Gastrocnemius medialis (tissue), 4 donors: ENCODE measurements at regions of chr3 and their contacts with region 1.

Region 1: DNA sequence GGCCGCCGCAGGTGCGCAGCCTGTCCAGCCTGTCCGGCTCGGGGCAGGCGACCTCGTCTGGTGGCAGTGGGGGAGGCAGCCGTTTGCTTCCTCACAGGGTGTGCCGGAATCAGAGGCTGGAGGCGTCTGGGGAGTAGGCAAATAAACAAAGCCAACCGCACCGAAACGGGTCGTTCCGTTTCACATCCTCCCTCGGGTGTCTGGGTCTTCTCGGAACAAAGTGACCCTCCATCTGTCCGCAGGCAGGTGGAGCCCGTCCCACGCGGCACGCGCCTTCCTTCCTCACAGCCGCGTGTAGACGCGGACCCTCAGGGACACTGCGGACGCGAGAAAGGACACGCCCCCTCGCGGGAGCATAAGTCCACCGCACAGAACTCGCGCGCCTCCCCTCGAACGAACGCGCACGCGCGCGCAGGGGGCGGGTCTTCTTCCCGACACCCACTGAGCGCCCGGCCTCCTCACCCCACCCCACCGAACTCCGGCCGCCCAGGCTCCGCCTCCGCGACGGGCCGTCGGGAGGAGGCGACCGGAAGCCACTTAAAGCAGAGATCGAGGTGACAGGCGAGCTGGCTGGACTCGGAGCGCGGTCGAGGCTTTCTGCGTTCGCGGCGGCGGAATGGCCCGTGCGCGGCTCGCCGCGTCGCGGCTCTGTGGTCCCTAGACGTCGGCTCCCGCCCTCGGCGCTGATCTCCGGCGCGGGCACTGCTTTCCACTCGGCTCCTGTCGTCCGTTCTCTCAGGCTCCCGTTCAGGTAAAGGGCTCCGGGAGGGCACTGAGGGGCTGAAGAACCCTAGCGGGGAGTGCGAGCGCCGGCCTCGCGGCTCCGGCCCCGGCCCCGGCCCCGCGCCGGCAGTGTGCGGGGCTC is at the start of gene TIPARP:
- DNase-seq: peak; percentile 99
- ATAC-seq: peak; percentile 79 to 89
- H3K4me3 ChIP-seq: peak within 1 kb of the TSS; percentile 77 to 92 (median 91)
- H3K27ac ChIP-seq: peak within 1 kb of the TSS; percentile 95 to 100 (median 98)
- H3K4me1 ChIP-seq: peaks cover 34 to 37% of the 10 kb centered on the region in 2 donors
- H3K27me3 ChIP-seq: no peaks in the 10 kb centered on the region
- CTCF ChIP-seq: peak; percentile 63 to 87 (median 84)
- POLR2A ChIP-seq: peak; percentile 98 to 99
- total RNA-seq, gene TIPARP: 16.0 to 50.2 (median 31.7) TPM

Region 2: DNA sequence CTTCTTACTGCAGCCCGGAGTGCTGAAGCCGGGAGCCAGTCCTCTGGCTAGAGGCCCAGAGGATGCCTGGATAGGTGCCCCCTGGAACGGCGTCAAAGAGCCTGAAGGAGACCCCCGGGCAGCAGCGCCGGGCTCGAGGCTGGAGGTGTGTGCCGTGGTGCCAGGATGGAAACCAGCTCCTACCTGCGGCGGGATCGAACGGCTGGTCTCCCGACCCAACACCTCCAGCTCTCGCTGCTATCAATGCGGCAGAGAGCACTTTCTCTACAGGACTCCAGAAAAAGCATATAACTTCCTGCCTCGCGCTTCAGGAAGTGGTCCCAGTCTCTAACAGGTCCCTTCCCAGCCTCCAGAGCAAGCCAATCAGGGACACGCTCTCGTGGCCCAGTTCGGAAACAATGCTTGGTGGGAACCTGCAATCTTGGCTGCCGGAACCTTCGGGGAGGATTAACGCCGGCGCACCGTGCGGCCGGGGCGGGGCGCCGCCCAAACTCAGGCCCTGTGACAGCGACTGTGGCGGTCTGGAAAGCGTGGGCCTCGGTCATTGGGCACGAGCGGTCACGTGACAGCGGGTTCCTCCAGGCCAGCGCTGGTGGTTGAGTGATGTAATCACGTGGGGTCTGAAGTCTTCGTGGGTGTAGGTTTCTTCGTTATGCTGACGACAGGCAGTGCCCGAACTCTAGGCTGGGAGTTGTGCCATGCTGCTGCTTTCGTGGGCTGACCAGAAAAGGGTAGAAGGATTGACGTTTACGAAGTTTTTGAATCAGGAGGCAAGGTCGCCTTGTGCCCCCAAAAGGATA is 819.9 kb before region 1 on chr3 and contains the start of gene SLC33A1:
- in situ Hi-C with region 1: no loop called
- intact Hi-C with region 1: loop called (anchors 10 kb)
- DNase-seq: peak; percentile 99
- ATAC-seq: peak; percentile 96 to 97
- H3K4me3 ChIP-seq: peak within 1 kb of the TSS; percentile 75 to 99 (median 87)
- H3K27ac ChIP-seq: peak within 1 kb of the TSS; percentile 95 to 96 (median 95)
- H3K4me1 ChIP-seq: peaks cover 36 to 37% of the 10 kb centered on the region in 2 donors
- H3K27me3 ChIP-seq: no peaks in the 10 kb centered on the region
- CTCF ChIP-seq: peak in 3 of 5 experiments; percentile 7 to 55 (median 30)
- POLR2A ChIP-seq: peak; percentile 67 to 75
- total RNA-seq, gene SLC33A1: 7.0 to 9.3 (median 8.2) TPM

Region 3: DNA sequence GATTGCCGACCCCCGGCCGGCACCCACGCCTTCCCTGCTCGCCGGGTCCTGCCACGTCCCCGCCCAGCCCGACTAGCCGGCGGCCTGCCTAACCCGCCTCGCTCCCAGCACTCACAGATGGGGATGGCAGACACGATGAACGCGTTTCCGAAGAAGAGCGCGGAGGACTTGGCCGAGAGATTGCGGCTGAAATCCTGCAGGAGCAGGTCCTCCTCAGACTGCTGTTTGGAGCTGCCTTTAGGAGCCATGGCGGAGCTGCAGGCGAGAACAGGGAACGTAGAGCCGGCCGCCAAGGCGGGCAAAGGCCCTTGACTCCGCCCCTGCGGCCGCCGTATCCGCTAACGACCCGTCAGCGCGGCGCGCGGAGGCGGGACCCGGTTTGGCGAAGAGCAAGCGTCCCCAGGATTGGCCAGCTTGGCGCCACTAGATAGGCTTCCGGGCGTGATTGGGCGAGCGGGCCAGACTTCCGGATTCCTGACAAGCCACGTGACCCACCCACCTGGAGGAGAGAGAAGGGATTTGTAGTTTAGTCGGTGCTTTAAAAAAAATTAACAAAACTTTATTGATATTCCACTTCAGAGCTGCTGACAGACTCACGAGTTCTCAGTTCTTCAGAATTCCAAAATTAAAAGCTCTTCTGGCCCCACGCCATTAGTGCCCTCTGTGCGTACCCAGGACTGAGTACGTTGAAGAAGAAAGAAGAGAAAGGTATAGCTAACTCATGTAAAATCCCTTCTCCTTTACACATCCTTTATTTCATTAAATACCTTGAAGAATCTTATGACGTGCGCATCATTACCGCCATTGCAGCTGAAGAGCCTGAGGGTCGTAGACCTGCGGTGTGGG is 119.2 kb before region 1 on chr3 and contains the start of gene SSR3:
- in situ Hi-C with region 1: loop called in 2 of 4 experiments (anchors 10 kb)
- intact Hi-C with region 1: loop called (anchors 1 kb)
- DNase-seq: peak; percentile 99
- ATAC-seq: peak; percentile 98
- H3K4me3 ChIP-seq: peak within 1 kb of the TSS; percentile 84 to 100 (median 88)
- H3K27ac ChIP-seq: peak within 1 kb of the TSS; percentile 85 to 97 (median 90)
- H3K4me1 ChIP-seq: peaks cover 22 to 27% of the 10 kb centered on the region in 2 donors
- H3K27me3 ChIP-seq: no peaks in the 10 kb centered on the region
- CTCF ChIP-seq: peak; percentile 34 to 65 (median 63)
- POLR2A ChIP-seq: peak; percentile 71 to 78
- total RNA-seq, gene SSR3: 50.9 to 91.5 (median 65.3) TPM

Region 4: DNA sequence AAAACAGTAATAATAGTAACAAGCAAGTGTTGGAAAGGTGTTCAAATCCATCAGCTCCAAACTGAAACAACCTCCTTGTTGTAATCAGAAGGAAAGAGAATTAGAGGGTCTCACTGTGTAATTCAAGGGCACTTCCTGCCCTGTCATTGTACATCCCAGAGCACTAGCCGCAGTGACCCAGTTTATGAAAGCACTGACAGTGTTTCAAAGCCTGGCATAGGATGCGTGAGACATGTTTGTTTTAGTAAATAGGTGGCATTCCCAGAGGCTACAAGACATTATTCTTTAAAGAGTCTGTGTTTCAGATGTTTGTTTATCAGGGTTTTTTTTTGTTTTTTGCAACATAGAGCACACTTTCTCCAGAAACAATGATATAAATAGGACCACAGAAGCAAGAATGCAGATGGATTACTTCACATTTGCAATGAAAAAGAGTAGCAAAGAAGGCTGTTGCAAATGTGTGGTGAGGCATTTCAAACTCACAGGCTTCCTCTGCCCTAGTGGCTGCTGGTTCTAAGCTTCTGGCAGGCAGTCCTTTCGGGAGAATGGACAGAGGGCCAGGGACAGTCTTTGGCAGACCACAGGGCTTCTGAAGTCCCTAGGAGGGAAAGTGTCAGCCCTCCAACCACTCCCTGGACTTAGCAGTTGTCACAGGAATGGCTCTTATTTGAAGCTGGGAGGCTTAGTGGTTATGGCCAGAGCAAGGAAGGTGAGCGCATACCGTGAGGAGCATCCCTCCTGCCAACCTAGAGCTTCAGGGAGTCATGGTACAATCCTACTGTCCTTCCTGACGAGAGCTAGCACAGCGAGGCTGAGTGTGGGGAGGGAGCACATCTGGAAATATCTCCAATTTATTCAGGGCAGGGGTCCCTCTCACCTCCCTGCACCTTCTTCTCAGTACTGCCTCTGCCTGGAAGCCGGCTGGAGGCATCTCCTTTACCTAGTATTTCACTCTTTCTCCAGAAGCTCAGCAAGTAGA is 31.2 kb before region 1 on chr3:
- in situ Hi-C with region 1: no loop called
- intact Hi-C with region 1: no loop called
- DNase-seq: no peak
- ATAC-seq: no peak
- H3K4me3 ChIP-seq: no peak overlapping the region
- H3K27ac ChIP-seq: no peak overlapping the region
- H3K4me1 ChIP-seq: peaks cover 13 to 22% of the 10 kb centered on the region in 2 donors
- H3K27me3 ChIP-seq: no peaks in the 10 kb centered on the region
- CTCF ChIP-seq: no peak
- POLR2A ChIP-seq: no peak

Region 5: DNA sequence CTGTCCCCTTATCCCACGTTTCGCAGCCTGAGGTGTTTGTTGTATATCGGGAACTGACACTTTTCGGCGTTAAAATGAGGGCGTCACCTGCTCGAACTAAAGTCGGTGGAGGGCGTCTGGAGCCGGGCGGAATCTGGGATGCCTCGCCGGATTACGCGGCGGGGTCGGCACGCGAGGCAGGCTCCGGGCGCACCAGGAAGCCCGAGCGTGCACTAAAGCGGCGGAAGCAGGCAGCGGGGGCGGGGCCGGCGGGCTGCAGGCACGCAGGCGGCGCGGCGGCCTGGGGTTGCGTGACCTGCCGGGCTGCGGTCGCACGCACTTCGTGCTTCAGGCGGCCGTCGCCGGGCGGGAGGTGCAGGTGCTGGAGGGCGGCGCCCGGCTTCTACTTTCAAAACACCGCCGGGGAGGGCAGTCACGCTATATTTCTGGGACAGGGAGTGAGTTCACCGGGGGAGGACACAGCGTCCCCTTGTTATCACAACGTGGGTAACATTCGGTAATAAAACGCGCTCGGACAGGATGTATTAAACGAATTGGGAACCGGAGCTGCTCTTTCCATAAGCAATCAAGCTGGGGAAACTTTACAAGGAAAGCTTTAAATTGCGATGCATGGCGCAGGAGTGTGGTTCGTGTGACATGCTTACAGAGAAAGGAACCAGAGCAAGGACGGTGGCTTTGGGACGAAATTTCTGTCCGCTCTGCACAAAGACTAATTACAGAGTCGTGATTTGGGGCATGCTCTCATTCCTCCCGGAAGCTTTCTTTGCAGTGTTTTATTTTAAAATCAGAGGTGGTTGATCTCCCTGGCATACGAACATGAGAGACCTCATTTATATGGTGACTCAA is 142.7 kb after region 1 on chr3:
- in situ Hi-C with region 1: loop called in 1 of 4 experiments (anchors 10 kb)
- intact Hi-C with region 1: loop called (anchors 2 kb)
- DNase-seq: peak; percentile 83 to 87
- ATAC-seq: peak; percentile 81 to 85
- H3K4me3 ChIP-seq: peak overlapping the region; percentile 63 to 98 (median 68)
- H3K27ac ChIP-seq: peak overlapping the region; percentile 84 to 90 (median 88)
- H3K4me1 ChIP-seq: peaks cover 21 to 24% of the 10 kb centered on the region in 2 donors
- H3K27me3 ChIP-seq: no peaks in the 10 kb centered on the region
- CTCF ChIP-seq: peak in 2 of 5 experiments; percentile 6 to 16
- POLR2A ChIP-seq: peak; percentile 65 to 73

Region 6: GRCh38 chr3:157130467-157131251 is 456.4 kb after region 1 on chr3:
- in situ Hi-C with region 1: loop called in 2 of 4 experiments (anchors 10 kb)
- intact Hi-C with region 1: no loop called
- DNase-seq: peak; percentile 45 to 63
- ATAC-seq: peak; percentile 25 to 53
- H3K4me3 ChIP-seq: peak overlapping the region in 3 of 4 donors; percentile 25 to 34 (median 34)
- H3K27ac ChIP-seq: peak overlapping the region; percentile 70 to 86 (median 72)
- H3K4me1 ChIP-seq: peaks cover 53 to 78% of the 10 kb centered on the region in 2 donors
- H3K27me3 ChIP-seq: no peaks in the 10 kb centered on the region
- CTCF ChIP-seq: peak; percentile 48 to 73 (median 66)
- POLR2A ChIP-seq: peak in 1 of 2 donors; percentile 14

Region 7: GRCh38 chr3:157159762-157160657 is 485.7 kb after region 1 on chr3 and contains the start of gene CCNL1:
- in situ Hi-C with region 1: no loop called
- intact Hi-C with region 1: loop called (anchors 5 kb)
- DNase-seq: peak; percentile 95 to 96
- ATAC-seq: peak; percentile 78 to 82
- H3K4me3 ChIP-seq: peak within 1 kb of the TSS; percentile 79 to 98 (median 94)
- H3K27ac ChIP-seq: peak within 1 kb of the TSS; percentile 93 to 99 (median 98)
- H3K4me1 ChIP-seq: peaks cover 48% of the 10 kb centered on the region in 2 donors
- H3K27me3 ChIP-seq: no peaks in the 10 kb centered on the region
- CTCF ChIP-seq: peak in 2 of 5 experiments; percentile 10 to 11
- POLR2A ChIP-seq: peak; percentile 99
- total RNA-seq, gene CCNL1: 34.3 to 110 (median 41.3) TPM